Dorsolateral prefrontal cortex (tissue), 120 donors: ENCODE measurements at regions of chr1 and their contacts with region 1.

Region 1: GRCh38 chr1:55277377-55278130 is 62.4 kb upstream of the USP24 start:
- DNase-seq: peak; percentile 74 to 87 (median 82)
- H3K4me3 ChIP-seq: no peak overlapping the region
- H3K27ac ChIP-seq: peak overlapping the region in 1 of 59 donors; percentile 29
- H3K27me3 ChIP-seq: no peaks in the 10 kb centered on the region
- CTCF ChIP-seq: peak; percentile 69 to 96 (median 88)

Region 2: DNA sequence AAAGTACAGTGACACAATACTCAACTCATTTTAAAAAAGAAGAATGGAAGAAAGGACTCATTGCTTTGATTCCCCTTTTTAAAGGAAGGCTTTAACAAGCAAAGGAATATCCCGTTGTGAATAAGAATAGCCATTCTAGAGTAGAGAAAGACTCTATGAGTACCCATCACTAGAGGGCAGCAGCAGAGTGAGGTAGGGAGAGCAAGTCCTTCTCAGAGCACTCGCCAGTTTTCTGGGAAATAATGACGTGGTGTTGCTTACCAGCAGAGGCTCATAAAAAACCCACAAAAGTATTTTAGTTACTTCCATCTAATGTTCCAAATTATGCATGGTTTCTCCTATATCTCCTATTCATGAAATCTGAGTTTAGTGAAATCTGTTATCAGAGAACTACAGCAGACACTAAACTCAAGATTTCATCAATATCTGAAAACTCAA is 137.0 kb before region 1 on chr1:
- intact Hi-C with region 1: loop called (anchors 1 to 2 kb)
- DNase-seq: peak in 8 of 10 donors; percentile 43 to 76 (median 58)
- H3K4me3 ChIP-seq: no peak overlapping the region
- H3K27ac ChIP-seq: peak overlapping the region in 13 of 59 donors; percentile 3 to 68 (median 29)
- H3K27me3 ChIP-seq: no peaks in the 10 kb centered on the region
- CTCF ChIP-seq: peak; percentile 69 to 97 (median 86)

Region 3: DNA sequence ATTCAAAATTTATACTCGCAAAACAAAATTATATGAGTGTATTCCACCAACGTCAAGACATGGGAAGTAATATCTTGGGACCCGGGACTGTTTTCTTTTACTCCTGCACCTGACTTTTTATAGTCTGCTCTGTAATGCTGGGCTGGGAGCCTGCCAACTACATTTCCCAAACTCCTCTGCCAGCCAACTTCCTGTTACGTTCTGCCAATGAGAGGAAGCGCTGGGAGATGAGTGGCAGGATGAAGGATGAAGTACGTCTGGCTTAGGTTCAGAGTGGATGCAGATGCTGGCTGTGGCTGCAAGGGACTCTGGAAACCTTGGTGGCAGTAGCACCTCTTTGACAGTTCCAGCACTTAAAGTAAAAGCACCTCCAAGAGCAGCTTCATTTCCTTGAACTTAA is 122.0 kb before region 1 on chr1:
- intact Hi-C with region 1: loop called in 1 of 2 experiments (anchors 5 kb)
- DNase-seq: peak; percentile 22 to 77 (median 54)
- H3K4me3 ChIP-seq: no peak overlapping the region
- H3K27ac ChIP-seq: peak overlapping the region in 17 of 59 donors; percentile 0 to 71 (median 48)
- H3K27me3 ChIP-seq: no peaks in the 10 kb centered on the region
- CTCF ChIP-seq: no peak

Region 4: GRCh38 chr1:55179177-55179835 is 98.2 kb before region 1 on chr1:
- intact Hi-C with region 1: no loop called
- DNase-seq: no peak
- H3K4me3 ChIP-seq: no peak overlapping the region
- H3K27ac ChIP-seq: no peak overlapping the region
- H3K27me3 ChIP-seq: no peaks in the 10 kb centered on the region
- CTCF ChIP-seq: no peak

Region 5: GRCh38 chr1:55215256-55216021 is 62.1 kb before region 1 on chr1 and contains the start of gene USP24:
- intact Hi-C with region 1: loop called (anchors 5 kb)
- DNase-seq: peak; percentile 46 to 84 (median 64)
- H3K4me3 ChIP-seq: peak within 1 kb of the TSS; percentile 71 to 98 (median 88)
- H3K27ac ChIP-seq: peak within 1 kb of the TSS; percentile 61 to 99 (median 96)
- H3K27me3 ChIP-seq: no peaks in the 10 kb centered on the region
- CTCF ChIP-seq: peak in 17 of 56 donors; percentile 1 to 49 (median 16)
- total RNA-seq, gene USP24: 40.6 to 86.1 (median 55.6) TPM

Region 6: DNA sequence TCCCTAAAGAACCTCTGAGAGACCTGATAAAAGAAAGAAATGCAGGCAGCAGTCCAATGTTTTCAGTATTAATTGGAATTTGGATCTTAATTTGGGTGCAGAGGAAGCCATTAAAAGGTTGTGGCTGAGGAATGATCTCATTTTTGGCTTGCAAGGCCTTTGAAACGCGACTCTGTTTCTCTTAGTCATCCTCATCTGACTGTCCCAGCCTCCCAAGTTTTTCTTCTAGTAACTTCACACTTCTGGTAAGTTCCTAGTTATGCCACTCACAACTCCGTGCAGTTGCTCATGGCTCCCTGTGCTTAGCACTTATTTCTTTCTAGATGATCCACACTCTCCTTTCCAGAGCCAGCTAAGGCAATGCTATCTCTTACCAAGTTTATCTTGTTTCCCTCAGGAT is 85.0 kb after region 1 on chr1:
- intact Hi-C with region 1: no loop called
- DNase-seq: no peak
- H3K4me3 ChIP-seq: no peak overlapping the region
- H3K27ac ChIP-seq: no peak overlapping the region
- H3K27me3 ChIP-seq: no peaks in the 10 kb centered on the region
- CTCF ChIP-seq: no peak